HEK293 (cell line): ENCODE measurements at regions of chr17 and their contacts with region 1.

Region 1: DNA sequence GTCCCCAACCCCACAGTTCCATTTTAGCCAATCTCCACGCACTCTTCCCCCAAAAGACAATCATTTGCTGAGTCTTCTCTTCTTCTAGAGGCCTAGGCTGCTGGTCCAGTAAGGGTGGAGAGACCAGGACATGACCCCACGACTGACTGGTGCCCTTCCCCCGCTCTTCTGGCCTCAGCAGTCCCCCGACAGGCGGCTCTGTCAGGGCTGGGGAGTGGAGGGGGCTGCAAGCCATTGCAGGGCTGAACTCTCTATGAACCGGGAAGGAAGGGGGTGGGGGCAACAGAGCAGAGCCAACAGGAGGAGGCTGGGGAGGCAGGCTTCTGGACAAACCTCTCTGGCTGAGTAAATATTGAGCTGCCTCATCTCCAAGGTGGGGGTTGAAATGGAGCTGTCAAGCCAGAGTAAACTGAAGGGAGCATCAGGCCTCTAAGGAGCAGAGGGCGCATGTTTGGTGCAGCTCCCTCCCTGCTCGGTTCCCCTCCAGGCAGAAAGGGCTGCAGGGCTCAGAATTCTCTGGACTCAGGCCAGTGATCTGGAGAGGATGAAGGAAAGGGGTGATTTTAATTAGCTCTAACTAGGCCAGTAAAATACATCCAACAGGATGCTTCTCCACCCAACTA is 8.7 kb downstream of the HOXB1 start:
- H3K4me3 ChIP-seq: no peak overlapping the region
- H3K27ac ChIP-seq: no peak overlapping the region; the same call in 1 of the 2 replicates
- H3K4me1 ChIP-seq: peaks cover 14% of the 10 kb centered on the region
- CTCF ChIP-seq: no peak

Region 2: GRCh38 chr17:48392857-48393256 is 129.3 kb before region 1 on chr17:
- CTCF ChIA-PET with region 1: no interaction called
- POLR2A ChIA-PET with region 1: no interaction called
- H3K4me3 ChIP-seq: no peak overlapping the region
- H3K27ac ChIP-seq: no peak overlapping the region
- H3K4me1 ChIP-seq: peaks cover 22% of the 10 kb centered on the region
- CTCF ChIP-seq: no peak

Region 3: GRCh38 chr17:48457080-48457836 is 64.9 kb before region 1 on chr17:
- CTCF ChIA-PET with region 1: no interaction called
- POLR2A ChIA-PET with region 1: no interaction called
- H3K4me3 ChIP-seq: peak overlapping the region; percentile 19; the same call in 1 of the 2 replicates
- H3K27ac ChIP-seq: no peak overlapping the region; the same call in 1 of the 2 replicates
- H3K4me1 ChIP-seq: peaks cover 9% of the 10 kb centered on the region
- CTCF ChIP-seq: peak; percentile 85

Region 4: DNA sequence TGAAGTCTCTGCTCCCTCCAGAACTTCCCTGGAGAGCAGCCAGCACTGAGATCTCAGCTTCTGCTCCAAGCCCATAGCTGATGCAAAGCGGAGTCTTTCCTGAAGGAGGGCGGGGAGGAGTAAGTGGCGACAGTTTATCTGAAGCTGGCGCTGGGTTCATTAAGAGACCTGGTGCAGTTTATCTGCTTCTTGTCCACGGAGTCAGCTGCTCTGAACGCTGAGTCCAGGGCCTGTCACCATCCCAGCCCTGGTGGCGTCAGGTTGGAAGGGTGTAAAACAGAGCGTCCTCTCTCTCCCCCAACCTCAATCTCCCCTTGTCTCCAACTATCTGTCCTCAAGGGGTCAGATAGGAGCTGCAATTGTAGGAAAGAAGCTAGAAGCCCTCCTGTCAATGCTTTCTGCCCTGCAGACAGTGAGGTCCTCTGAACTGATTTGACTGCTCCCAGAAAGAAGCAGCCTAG is 21.1 kb before region 1 on chr17:
- CTCF ChIA-PET with region 1: interaction called, 15 read pairs
- POLR2A ChIA-PET with region 1: interaction called, 3 read pairs
- H3K4me3 ChIP-seq: no peak overlapping the region
- H3K27ac ChIP-seq: peak overlapping the region; percentile 9; the same call in 1 of the 2 replicates
- H3K4me1 ChIP-seq: peaks cover 36% of the 10 kb centered on the region
- CTCF ChIP-seq: peak; percentile 87

Region 5: GRCh38 chr17:48505787-48506645 is 16.1 kb before region 1 on chr17:
- CTCF ChIA-PET with region 1: interaction called, 15 read pairs
- POLR2A ChIA-PET with region 1: interaction called, 5 read pairs
- H3K4me3 ChIP-seq: no peak overlapping the region
- H3K27ac ChIP-seq: no peak overlapping the region; the same call in 1 of the 2 replicates
- H3K4me1 ChIP-seq: peaks cover 24% of the 10 kb centered on the region
- CTCF ChIP-seq: no peak